Activated CD4-positive, alpha-beta memory T cell treated with anti-CD3 and anti-CD28 coated beads for 36 hours (primary cell): ENCODE measurements at regions of chr18 and their contacts with region 1.

Region 1: DNA sequence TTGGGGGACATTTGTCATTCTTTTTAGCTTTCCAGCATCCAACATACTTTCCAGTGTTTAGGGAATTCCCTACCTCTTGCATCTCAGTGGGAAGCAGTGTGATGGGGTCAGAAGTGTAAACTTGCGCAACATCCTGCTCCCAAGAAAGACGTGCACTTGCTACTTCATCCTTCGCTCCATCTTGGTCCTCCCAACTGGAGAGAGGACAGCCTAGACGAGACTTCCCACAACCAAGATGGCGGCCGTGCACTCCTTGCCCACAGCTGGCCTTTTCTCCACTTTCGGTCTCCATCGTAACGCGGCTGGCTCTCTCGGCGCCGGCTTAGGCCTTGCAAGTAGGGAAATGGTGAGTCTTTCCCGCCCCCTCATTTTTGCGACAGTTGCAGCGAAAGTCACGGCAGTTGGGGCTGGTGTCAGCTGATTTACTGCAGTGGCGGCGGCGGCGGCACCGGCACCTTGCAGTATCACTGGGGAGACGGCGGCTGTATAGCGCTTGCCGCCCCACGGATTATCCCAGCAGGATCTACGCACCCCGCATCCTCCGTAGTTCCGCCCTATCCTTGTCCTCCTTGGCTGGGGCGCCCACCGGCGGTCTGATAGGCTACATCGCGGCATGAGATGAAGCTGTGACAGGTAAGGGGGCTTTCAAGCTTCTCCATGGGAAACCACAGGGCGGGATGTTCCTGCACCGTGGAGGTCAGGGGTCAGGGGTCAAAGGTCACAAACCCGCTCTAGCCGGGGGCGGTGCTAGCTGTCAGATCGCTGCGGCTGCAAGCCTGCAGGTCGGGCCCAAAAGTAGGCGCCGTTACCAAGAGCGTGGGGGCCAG is at the start of gene WDR7:
- DNase-seq: peak; percentile 98
- H3K4me3 Mint-ChIP-seq: peak within 1 kb of the TSS; percentile 90
- H3K27ac Mint-ChIP-seq: peak within 1 kb of the TSS; percentile 92
- H3K4me1 Mint-ChIP-seq: peaks cover 50% of the 10 kb centered on the region
- H3K27me3 Mint-ChIP-seq: no peaks in the 10 kb centered on the region
- total RNA-seq, gene WDR7: 18.0 to 19.5 TPM

Region 2: DNA sequence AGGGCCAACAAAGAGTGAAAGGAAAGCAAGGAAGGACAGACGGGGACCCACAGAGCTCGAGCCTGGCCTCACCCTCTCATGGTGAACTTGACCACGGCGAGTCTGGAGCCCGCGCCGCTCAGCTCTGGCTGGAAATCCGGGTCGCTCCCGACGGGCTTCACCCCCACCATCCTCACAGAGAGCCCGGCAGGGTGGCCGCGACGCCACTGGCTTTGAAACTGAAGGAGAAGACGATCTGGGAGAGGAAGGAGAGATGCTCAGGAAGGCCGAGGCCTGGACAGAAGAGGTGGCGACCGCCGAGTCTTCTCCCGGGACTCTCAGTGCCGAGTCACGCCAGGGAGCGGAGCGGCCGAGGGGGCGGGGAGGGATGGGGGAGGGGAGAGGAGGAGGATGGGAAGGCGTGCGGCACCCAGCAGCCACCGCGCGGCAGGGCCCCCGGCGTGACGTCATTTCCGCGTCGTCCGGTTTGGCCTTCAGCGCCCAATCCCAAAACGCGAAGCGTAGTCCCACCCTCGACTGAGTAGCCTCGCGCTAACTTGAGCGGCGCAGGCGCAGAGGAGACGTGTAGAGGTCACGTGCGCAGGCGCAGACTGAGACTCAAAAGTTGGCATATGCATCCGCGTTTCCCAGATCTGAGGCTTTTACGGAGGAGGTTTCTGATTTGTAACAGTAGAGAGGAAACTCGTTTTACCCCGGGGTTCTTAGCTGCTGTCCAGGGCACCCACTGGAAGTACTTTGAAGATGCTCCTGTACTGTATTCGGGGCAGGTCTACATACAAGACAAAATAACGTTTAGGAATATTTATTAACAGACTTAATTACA is 12.7 kb before region 1 on chr18 and contains the start of gene TXNL1:
- CTCF ChIA-PET with region 1: interaction called, 15 read pairs
- POLR2A ChIA-PET with region 1: interaction called, 32 read pairs
- intact Hi-C with region 1: loop called (anchors 1 kb)
- DNase-seq: peak; percentile 100
- H3K4me3 Mint-ChIP-seq: peak within 1 kb of the TSS; percentile 99
- H3K27ac Mint-ChIP-seq: peak within 1 kb of the TSS; percentile 94
- H3K4me1 Mint-ChIP-seq: peaks cover 44% of the 10 kb centered on the region
- H3K27me3 Mint-ChIP-seq: no peaks in the 10 kb centered on the region
- total RNA-seq, gene TXNL1: 68.7 to 68.9 TPM

Region 3: GRCh38 chr18:56709463-56709862 is 58.3 kb after region 1 on chr18:
- CTCF ChIA-PET with region 1: interaction called, 6 read pairs
- POLR2A ChIA-PET with region 1: no interaction called
- intact Hi-C with region 1: loop called (anchors 1 kb)
- DNase-seq: peak; percentile 29
- H3K4me3 Mint-ChIP-seq: no peak overlapping the region
- H3K27ac Mint-ChIP-seq: no peak overlapping the region
- H3K4me1 Mint-ChIP-seq: peaks cover 7% of the 10 kb centered on the region
- H3K27me3 Mint-ChIP-seq: no peaks in the 10 kb centered on the region

Region 4: GRCh38 chr18:56823986-56824565 is 172.9 kb after region 1 on chr18:
- CTCF ChIA-PET with region 1: no interaction called
- POLR2A ChIA-PET with region 1: no interaction called
- intact Hi-C with region 1: no loop called
- DNase-seq: no peak
- H3K4me3 Mint-ChIP-seq: no peak overlapping the region
- H3K27ac Mint-ChIP-seq: no peak overlapping the region
- H3K4me1 Mint-ChIP-seq: peaks cover 16% of the 10 kb centered on the region
- H3K27me3 Mint-ChIP-seq: no peaks in the 10 kb centered on the region

Region 5: GRCh38 chr18:57434536-57435494 is 783.7 kb after region 1 on chr18 and contains the start of gene ONECUT2:
- CTCF ChIA-PET with region 1: no interaction called
- POLR2A ChIA-PET with region 1: no interaction called
- intact Hi-C with region 1: loop called (anchors 5 kb)
- DNase-seq: peak; percentile 83
- H3K4me3 Mint-ChIP-seq: peak within 1 kb of the TSS; percentile 48
- H3K27ac Mint-ChIP-seq: peak within 1 kb of the TSS; percentile 42
- H3K4me1 Mint-ChIP-seq: peaks cover 49% of the 10 kb centered on the region
- H3K27me3 Mint-ChIP-seq: peaks cover 81% of the 10 kb centered on the region
- total RNA-seq, gene ONECUT2: 0.02 TPM in 1 of 2 experiments, not detected in the other

Region 6: GRCh38 chr18:57833443-57834101 is 1182.4 kb after region 1 on chr18:
- CTCF ChIA-PET with region 1: no interaction called
- POLR2A ChIA-PET with region 1: no interaction called
- intact Hi-C with region 1: loop called (anchors 10 kb)
- DNase-seq: peak; percentile 40
- H3K4me3 Mint-ChIP-seq: peak overlapping the region; percentile 21
- H3K27ac Mint-ChIP-seq: peak overlapping the region; percentile 40
- H3K4me1 Mint-ChIP-seq: peaks cover 28% of the 10 kb centered on the region
- H3K27me3 Mint-ChIP-seq: peaks cover 29% of the 10 kb centered on the region